ENCODE measurements at regions of chr3 and their contacts with region 1.

Region 1: GRCh38 chr3:23653647-23654525 is 151.9 kb upstream of the UBE2E1 start:
- DNase-seq: peak; percentile 97
- ATAC-seq: peak; percentile 88
- H3K4me3 ChIP-seq: peak overlapping the region; percentile 26; the same call in 1 of the 2 replicates
- H3K27ac ChIP-seq: peak overlapping the region; percentile 88
- H3K4me1 ChIP-seq: peaks cover 48% of the 10 kb centered on the region
- H3K27me3 ChIP-seq: no peaks in the 10 kb centered on the region
- CTCF ChIP-seq: no peak
- EP300 ChIP-seq: peak; percentile 29 to 92; a peak in 3 of 4 replicates
- POLR2A ChIP-seq: no peak
- RAD21 ChIP-seq: peak; percentile 24; the same call in 1 of the 2 replicates

Region 2: GRCh38 chr3:23527326-23527725 is 126.6 kb before region 1 on chr3:
- CTCF ChIA-PET with region 1: no interaction called
- POLR2A ChIA-PET with region 1: no interaction called
- RAD21 ChIA-PET with region 1: no interaction called
- SMC1A ChIA-PET with region 1: no interaction called
- in situ Hi-C with region 1: no loop called
- intact Hi-C with region 1: no loop called
- DNase-seq: no peak
- ATAC-seq: no peak
- H3K4me3 ChIP-seq: no peak overlapping the region
- H3K27ac ChIP-seq: no peak overlapping the region
- H3K4me1 ChIP-seq: no peaks in the 10 kb centered on the region
- H3K27me3 ChIP-seq: no peaks in the 10 kb centered on the region
- CTCF ChIP-seq: no peak
- EP300 ChIP-seq: no peak
- POLR2A ChIP-seq: no peak
- RAD21 ChIP-seq: no peak

Region 3: DNA sequence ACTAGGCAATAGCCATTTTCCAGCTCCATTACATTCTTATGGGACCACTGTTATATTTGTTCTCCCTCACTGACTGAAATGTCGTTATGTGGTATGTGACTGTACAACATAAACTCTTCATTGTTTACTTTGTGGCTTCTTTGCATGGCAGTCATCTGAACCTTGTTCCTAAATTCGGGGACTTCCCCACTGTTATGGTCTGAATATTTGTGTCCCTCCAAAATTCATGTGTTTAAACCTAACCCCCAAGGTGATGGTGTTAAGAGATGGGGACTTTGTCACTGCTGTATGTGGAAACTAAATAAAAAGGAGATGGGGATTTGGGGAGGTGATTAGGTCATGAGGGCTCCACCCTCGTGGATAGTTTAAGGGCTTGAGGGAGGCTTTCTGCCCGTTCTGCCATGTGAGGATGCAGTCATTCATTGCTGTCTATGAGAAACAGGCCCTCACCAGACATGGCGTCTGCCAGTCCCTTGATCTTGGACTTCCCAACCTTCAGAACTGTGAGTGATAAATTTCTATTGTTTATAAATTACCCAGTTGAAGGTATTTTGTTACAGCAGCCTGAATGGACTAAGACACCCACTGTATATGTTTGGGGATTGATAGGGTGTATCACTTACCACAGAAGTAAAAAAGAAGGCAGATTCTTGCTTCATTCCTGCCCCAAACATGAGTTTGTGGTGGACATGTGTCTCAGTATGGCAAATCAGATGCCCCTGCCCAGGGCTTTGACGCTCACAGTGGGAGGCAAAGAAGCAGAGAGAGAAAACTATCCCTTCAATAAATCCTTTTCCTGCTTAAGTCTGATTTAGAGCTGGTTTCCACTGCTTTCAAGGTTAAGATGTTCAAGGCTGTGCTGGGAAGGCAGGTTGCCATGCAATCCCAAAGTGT is 13.9 kb after region 1 on chr3:
- CTCF ChIA-PET with region 1: interaction called, 4 read pairs
- POLR2A ChIA-PET with region 1: interaction called, 8 read pairs
- RAD21 ChIA-PET with region 1: interaction called, 11 read pairs
- SMC1A ChIA-PET with region 1: interaction called, 13 read pairs
- in situ Hi-C with region 1: no loop called
- intact Hi-C with region 1: no loop called
- DNase-seq: no peak
- ATAC-seq: peak; percentile 63
- H3K4me3 ChIP-seq: no peak overlapping the region
- H3K27ac ChIP-seq: no peak overlapping the region; the same call in 1 of the 2 replicates
- H3K4me1 ChIP-seq: peaks cover 10% of the 10 kb centered on the region
- H3K27me3 ChIP-seq: no peaks in the 10 kb centered on the region
- CTCF ChIP-seq: no peak
- EP300 ChIP-seq: no peak
- POLR2A ChIP-seq: no peak
- RAD21 ChIP-seq: no peak

Region 4: GRCh38 chr3:23817508-23818223 is 163.8 kb after region 1 on chr3:
- CTCF ChIA-PET with region 1: no interaction called
- POLR2A ChIA-PET with region 1: no interaction called
- RAD21 ChIA-PET with region 1: no interaction called
- SMC1A ChIA-PET with region 1: no interaction called
- in situ Hi-C with region 1: no loop called
- intact Hi-C with region 1: no loop called
- DNase-seq: no peak
- ATAC-seq: no peak
- H3K4me3 ChIP-seq: no peak overlapping the region
- H3K27ac ChIP-seq: no peak overlapping the region
- H3K4me1 ChIP-seq: peaks cover 17% of the 10 kb centered on the region
- H3K27me3 ChIP-seq: no peaks in the 10 kb centered on the region
- CTCF ChIP-seq: no peak
- EP300 ChIP-seq: no peak
- POLR2A ChIP-seq: no peak
- RAD21 ChIP-seq: no peak